ENCODE measurements at regions of chr10 and their contacts with region 1.

Region 1: DNA sequence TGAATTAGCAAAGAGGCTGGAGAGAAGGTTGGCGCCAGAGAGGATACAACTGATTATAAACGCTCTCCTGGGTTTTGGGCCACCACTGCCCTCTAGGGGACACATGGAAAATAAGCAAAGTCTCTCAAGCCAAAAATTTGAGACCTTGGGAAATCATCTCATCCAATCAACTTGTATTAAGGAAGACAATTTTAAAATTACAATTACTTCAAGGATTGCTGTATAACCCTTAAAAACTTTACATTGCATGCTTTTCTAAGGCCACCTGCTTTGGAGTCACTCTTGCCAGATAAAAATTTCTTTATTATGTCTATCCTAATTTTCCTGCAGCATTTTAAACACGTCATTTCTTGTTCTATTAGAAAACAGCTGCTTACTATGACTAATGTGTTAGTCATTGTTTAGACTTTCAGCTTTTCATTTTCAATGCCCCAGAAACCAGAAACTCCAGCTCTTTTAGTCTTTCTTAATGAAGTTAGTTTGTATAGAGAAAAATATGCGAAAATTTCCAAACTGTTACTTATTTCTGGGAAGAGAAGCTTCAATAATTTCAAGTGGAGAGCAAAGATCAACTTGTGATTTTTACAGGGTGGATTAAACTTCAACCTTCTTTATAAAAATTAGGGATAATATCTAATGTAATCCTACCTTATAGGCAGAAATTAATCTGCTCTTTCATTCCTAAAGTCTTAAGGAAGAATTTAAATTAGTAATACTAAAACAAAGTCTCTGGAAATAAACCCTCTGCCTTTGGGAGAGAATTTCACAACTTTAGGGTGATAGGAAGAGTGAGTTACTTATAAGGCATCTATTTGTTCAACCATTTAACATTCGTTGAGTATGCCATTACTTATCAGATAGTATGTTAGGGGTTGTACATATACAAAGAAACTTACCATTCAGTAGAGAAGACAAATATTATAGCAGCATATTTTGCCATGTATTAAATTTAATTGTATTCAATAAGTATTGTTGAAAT is 20.6 kb upstream of the RHOBTB1 start:
- DNase-seq: no peak
- ATAC-seq: peak; percentile 59
- H3K4me3 Mint-ChIP-seq: no peak overlapping the region
- H3K27ac Mint-ChIP-seq: no peak overlapping the region
- H3K4me1 Mint-ChIP-seq: peaks cover 22% of the 10 kb centered on the region
- H3K27me3 Mint-ChIP-seq: peaks cover 8% of the 10 kb centered on the region
- CTCF ChIP-seq: peak; percentile 85

Region 2: GRCh38 chr10:60444494-60445064 is 520.0 kb before region 1 on chr10:
- CTCF ChIA-PET with region 1: no interaction called
- POLR2A ChIA-PET with region 1: no interaction called
- intact Hi-C with region 1: loop called (anchors 1 kb)
- DNase-seq: no peak
- ATAC-seq: no peak
- H3K4me3 Mint-ChIP-seq: no peak overlapping the region
- H3K27ac Mint-ChIP-seq: no peak overlapping the region
- H3K4me1 Mint-ChIP-seq: peaks cover 8% of the 10 kb centered on the region
- H3K27me3 Mint-ChIP-seq: no peaks in the 10 kb centered on the region
- CTCF ChIP-seq: no peak

Region 3: GRCh38 chr10:60816628-60817397 is 147.7 kb before region 1 on chr10:
- CTCF ChIA-PET with region 1: interaction called, 10 read pairs
- POLR2A ChIA-PET with region 1: no interaction called
- intact Hi-C with region 1: loop called (anchors 1 kb)
- DNase-seq: no peak
- ATAC-seq: peak; percentile 79
- H3K4me3 Mint-ChIP-seq: no peak overlapping the region
- H3K27ac Mint-ChIP-seq: no peak overlapping the region
- H3K4me1 Mint-ChIP-seq: peaks cover 9% of the 10 kb centered on the region
- H3K27me3 Mint-ChIP-seq: no peaks in the 10 kb centered on the region
- CTCF ChIP-seq: peak; percentile 90

Region 4: DNA sequence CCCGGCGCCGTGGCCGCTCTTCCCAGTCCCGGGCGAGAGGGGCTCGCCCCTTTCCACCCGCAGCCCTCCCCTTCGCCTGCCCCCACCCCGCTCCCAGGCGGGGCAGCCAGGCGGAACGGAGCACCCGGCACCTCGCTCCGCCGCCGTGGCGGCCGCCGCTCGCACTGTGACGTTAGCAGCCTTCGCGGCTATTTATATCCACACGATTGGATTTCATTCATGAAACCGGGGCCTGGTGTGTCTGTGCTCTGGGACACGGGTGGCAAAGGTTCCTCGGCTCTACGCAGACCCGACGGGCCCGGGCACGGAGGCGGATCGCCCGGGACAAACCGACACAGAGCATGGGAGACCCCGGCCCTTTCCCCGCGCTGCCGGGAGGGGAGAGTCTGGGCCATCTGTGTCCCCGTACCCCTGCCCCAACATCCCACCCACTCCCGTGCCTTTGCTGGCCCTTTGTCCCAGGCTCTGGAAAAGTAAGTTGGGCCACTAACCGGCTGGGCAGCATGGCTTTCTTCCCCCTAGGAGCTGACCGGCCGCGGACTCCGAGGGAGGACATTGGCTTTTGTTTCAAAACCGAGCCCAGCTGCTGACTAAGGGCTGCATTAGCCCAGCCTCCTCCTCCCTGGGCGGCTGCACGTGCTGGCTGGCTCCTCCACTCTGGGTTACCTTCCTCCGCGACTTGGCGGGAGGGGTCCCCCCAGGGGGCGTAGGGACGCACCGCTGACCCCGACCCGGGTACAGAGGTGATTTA is 20.2 kb before region 1 on chr10 and contains the start of gene RHOBTB1:
- CTCF ChIA-PET with region 1: interaction called, 3 read pairs
- POLR2A ChIA-PET with region 1: interaction called, 3 read pairs
- intact Hi-C with region 1: loop called (anchors 1 kb)
- DNase-seq: peak; percentile 27
- ATAC-seq: peak; percentile 60
- H3K4me3 Mint-ChIP-seq: peak within 1 kb of the TSS; percentile 85
- H3K27ac Mint-ChIP-seq: peak within 1 kb of the TSS; percentile 61
- H3K4me1 Mint-ChIP-seq: peaks cover 14% of the 10 kb centered on the region
- H3K27me3 Mint-ChIP-seq: peaks cover 23% of the 10 kb centered on the region
- CTCF ChIP-seq: no peak
- total RNA-seq, gene RHOBTB1: 0.24 and 0.51 TPM in 2 replicates